Aorta (tissue), 5 donors: ENCODE measurements at regions of chr17 and their contacts with region 1.

Region 1: GRCh38 chr17:49031965-49032928 is 35.1 kb downstream of the IGF2BP1 start:
- DNase-seq: no peak
- ATAC-seq: no peak
- H3K4me3 ChIP-seq: no peak overlapping the region
- H3K27ac ChIP-seq: no peak overlapping the region
- H3K4me1 ChIP-seq: no peaks in the 10 kb centered on the region
- H3K27me3 ChIP-seq: no peaks in the 10 kb centered on the region

Region 2: DNA sequence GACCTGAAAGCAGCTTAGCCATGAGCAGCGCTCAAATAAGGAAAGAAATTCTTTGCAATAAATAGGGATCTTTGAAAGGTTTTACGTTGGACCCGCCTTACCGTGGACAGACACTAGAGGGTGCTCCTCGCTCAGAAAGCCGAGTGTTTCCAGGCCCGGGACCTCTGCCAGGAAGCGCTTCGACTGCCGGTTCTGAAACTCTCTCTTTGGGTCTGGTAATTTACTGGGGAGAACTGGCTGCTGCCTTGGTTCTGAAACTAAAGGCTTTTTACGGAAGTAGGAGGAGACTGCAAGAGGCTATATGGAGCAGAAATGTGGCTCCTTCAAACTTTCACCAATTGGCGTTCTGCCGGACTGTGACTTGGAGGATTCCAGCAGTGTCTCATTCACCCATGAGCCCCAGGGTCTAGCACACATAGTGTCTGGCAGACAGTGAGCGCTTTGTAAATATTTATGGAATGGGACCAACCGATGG is 360.5 kb before region 1 on chr17:
- intact Hi-C with region 1: loop called in 1 of 2 experiments (anchors 5 kb)
- DNase-seq: peak; percentile 87 to 94
- ATAC-seq: peak; percentile 90
- H3K4me3 ChIP-seq: peak overlapping the region in 1 of 2 donors; percentile 2
- H3K27ac ChIP-seq: no peak overlapping the region
- H3K4me1 ChIP-seq: no peaks in the 10 kb centered on the region
- H3K27me3 ChIP-seq: peaks cover 0 to 1% of the 10 kb centered on the region in 2 donors

Region 3: DNA sequence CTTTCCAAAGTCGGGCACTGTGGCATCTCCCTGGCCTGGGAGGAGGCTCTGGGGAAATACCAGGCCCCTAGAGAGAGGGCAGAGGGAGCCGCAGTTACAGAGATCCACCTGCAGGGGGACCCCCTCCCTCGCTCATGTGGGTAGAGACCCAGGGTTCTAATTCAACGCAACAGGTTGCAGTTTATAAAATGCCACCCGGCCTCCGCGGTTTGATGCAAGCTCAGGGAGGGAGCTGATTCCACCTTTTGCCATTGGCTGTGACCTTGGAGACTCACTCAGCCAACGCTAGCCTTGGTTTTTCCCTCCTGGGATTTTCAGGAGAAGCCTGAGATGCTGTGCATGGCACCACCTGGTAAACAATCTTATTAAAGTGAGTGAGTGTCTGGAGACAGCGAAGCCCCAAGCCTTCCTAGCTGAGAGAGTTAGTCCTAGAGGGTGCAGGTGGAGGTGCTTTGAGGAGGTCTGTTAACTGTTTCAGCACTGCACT is 227.3 kb before region 1 on chr17:
- intact Hi-C with region 1: loop called in 1 of 2 experiments (anchors 5 kb)
- DNase-seq: peak; percentile 56 to 85
- ATAC-seq: no peak
- H3K4me3 ChIP-seq: no peak overlapping the region
- H3K27ac ChIP-seq: no peak overlapping the region
- H3K4me1 ChIP-seq: no peaks in the 10 kb centered on the region
- H3K27me3 ChIP-seq: peaks cover 0 to 2% of the 10 kb centered on the region in 2 donors

Region 4: DNA sequence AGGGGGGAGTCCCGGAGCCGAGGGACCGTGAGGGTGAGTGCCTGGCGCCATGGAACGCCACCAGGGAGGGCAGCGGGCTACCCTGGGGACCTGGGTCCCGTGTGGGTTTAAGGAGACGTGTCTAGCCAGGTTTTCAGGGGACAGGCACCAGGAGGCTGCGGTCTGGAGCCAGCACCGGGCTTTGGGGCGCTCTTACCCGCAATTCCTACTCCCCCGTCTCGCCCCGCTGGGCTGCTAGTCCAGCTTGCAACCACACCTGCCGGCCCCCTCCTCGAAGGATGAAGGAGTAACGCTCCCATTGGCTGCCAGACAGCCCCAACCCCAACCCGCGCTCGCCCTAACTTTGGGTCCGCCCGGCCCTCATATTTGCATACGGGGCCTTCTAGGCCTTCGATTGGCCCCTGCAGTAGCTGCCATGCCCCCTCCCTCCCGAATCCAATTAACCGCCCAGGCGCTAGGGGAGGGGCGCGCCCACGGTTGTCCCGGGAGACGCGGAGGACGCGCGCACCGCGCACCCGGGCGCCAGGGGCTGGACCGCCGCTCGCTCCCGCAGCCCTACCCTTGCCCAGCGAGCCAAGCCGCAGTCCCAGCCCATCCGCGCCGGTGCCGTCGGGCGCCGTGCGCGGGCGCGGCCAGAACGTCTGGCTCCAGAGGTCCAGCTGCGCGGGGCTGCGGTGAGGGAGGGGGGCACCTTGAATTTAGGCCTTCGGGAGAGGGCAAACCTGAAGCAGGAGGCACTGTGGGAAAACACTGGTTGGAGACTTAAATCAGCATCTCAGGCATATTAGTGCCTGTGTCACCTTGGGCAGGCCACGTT is 215.3 kb before region 1 on chr17 and contains the start of gene TTLL6:
- intact Hi-C with region 1: loop called in 1 of 2 experiments (anchors 5 kb)
- DNase-seq: peak; percentile 82 to 92
- ATAC-seq: peak; percentile 91
- H3K4me3 ChIP-seq: peak within 1 kb of the TSS in 1 of 2 donors; percentile 1
- H3K27ac ChIP-seq: no peak within 1 kb of the TSS
- H3K4me1 ChIP-seq: no peaks in the 10 kb centered on the region
- H3K27me3 ChIP-seq: no peaks in the 10 kb centered on the region
- total RNA-seq, gene TTLL6: 0.21 TPM in 1 of 2 donors, not detected in the other

Region 5: GRCh38 chr17:48878918-48879898 is 153.0 kb before region 1 on chr17:
- intact Hi-C with region 1: loop called (anchors 5 to 10 kb)
- DNase-seq: peak in 1 of 2 donors; percentile 54
- ATAC-seq: peak; percentile 85
- H3K4me3 ChIP-seq: no peak overlapping the region
- H3K27ac ChIP-seq: no peak overlapping the region
- H3K4me1 ChIP-seq: no peaks in the 10 kb centered on the region
- H3K27me3 ChIP-seq: no peaks in the 10 kb centered on the region

Region 6: DNA sequence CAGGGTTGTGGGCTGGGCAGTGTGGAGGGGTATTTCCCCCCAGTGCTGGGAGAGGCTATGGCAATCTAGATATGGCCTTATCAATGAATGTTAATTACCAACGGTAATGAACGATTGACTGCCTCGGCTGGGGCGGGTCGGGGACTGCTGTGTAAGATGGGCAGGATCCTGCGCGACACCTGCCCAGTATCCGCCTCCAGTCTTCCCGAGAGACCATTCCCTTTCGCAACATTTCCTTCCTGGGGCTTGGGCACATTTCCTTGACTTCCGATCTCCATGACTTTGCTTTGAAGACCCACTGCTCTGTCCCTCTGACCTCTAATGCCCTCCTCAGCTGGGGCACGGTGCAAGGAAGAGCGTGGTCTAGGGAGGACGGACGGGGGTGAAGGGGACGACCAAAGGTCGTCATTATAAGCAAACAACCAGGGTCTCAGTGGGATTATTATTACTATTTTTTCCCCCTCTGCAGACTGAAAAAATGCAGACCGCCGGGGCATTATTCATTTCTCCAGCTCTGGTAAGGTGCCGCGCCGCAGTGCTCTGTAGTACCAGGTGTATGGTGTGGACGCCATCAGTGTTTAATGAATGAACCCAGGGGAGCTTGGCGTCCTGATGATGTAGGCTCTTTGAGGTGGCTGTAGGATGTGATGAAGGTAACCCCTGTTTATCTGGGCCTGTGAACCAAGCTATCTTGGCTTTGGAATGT is 139.2 kb before region 1 on chr17:
- intact Hi-C with region 1: loop called (anchors 5 to 10 kb)
- DNase-seq: peak in 1 of 2 donors; percentile 54
- ATAC-seq: peak; percentile 0
- H3K4me3 ChIP-seq: peak overlapping the region; percentile 20 to 30
- H3K27ac ChIP-seq: no peak overlapping the region
- H3K4me1 ChIP-seq: no peaks in the 10 kb centered on the region
- H3K27me3 ChIP-seq: no peaks in the 10 kb centered on the region

Region 7: DNA sequence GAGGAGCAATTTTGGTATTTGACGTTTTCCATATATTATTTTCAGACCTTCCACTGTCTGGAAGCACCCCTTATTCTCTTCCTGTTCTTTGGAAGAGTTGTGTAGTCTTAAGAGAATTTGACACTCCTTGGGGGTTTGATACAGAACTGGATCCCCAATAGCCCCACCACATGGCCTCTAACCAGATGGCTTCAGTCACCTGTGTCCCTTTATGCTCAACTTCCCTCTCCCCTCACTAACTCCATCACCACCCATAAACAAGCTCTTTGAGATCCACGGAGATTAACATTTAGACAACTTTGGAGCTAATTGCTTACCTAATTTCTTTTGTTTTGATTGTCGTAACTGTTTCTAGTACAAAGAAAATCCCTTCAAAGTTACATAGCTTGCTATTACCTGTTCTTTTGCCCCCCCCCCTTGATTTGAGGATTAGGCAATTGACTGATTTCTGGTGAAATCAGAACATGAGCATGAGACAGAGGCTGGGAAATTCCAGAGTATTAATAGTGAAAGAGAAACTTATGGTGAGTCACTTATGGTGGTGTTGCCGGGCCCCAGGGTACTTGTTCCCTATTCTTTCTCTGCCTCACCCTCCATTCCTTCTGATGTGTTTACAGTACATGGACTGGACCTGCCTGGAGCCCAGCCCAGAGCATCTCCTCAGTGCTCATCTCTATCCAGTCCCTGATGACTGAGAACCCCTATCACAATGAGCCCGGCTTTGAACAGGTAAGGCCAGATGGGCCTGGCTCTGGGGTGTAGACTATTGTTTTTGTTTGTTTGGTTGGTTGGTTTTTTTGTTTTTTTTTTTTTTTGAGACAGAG is 116.6 kb before region 1 on chr17:
- intact Hi-C with region 1: no loop called
- DNase-seq: no peak
- ATAC-seq: no peak
- H3K4me3 ChIP-seq: no peak overlapping the region
- H3K27ac ChIP-seq: no peak overlapping the region
- H3K4me1 ChIP-seq: no peaks in the 10 kb centered on the region
- H3K27me3 ChIP-seq: no peaks in the 10 kb centered on the region

Region 8: DNA sequence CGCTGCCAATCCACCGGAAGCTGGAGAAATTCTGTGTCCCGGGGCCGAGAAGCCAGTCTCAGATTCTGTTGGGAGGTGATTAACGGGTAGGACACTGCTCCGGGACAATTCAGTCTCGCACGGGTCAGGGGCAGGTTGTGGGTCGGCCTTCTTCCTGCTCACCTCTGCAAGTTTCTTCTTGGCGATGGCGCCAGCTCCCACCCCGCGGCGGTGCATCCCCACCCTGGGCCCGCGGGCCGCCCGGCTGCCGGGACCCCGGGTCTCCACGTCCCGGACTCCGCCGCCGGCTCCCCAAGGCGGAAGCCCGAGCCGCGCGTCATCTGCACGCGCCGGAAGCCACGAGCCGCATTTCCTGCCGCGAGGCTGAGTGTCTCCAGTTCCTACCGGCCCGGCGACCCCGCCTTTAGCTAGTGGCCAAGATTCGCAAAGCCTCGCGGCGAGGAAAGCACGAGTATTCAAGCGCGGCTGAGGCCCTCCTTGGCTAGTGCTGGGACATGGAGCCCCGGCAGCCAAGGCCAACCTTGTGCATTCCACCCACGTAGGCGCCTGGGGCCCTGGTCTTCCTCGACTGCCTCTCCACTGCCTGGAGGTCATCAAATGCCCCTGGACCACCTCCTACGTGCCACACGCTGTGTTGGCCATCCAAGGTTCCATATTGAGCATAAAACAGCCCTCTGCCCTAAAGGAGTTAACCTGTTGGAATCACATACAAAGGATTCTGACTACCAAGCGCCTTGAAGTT is 87.6 kb before region 1 on chr17 and contains the start of gene SNF8:
- intact Hi-C with region 1: loop called in 1 of 2 experiments (anchors 5 kb)
- DNase-seq: peak; percentile 95 to 98
- ATAC-seq: peak; percentile 95
- H3K4me3 ChIP-seq: peak within 1 kb of the TSS; percentile 74 to 93
- H3K27ac ChIP-seq: peak within 1 kb of the TSS in 1 of 2 donors; percentile 85
- H3K4me1 ChIP-seq: no peaks in the 10 kb centered on the region
- H3K27me3 ChIP-seq: no peaks in the 10 kb centered on the region
- total RNA-seq, gene SNF8: 78.8 to 82.9 TPM